HEK293 (cell line): ENCODE measurements at regions of chr22 and their contacts with region 1.

Region 1: DNA sequence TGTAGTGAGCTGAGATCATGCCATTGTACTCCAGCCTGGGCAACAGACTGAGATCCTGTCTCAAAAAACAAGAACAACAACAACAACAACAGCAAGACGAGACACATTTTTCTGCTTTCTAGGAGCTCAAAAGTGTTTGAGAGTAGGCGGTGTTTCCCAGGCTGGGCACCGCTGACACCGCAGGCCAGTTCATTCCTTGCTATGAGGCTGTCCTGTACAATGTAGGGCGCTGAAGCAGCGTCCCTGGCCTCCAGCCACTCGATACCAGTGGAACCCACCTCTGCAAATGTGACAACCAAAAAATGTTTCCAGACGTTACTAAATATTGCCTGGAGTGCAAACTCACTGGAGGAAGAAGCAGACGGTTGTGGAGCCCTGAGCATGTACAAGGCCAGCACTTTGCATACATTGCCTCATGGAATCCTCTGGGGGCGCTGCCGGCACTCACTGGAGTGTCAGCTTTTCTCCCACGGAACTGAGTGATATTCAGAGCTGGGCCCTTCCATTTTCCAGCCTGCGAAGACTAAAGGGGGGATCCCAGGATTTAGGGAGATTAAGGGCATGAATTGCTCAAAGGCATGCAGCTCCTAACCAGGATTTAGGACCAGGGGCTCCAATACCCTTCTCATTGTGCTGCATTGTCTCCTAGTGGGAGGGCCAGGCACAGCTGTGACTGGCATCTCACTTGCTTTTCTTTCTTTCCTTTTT is 5.8 kb upstream of the MIEF1 start:
- H3K4me3 ChIP-seq: no peak overlapping the region
- H3K27ac ChIP-seq: no peak overlapping the region
- H3K4me1 ChIP-seq: peaks cover 4% of the 10 kb centered on the region
- CTCF ChIP-seq: peak; percentile 69

Region 2: DNA sequence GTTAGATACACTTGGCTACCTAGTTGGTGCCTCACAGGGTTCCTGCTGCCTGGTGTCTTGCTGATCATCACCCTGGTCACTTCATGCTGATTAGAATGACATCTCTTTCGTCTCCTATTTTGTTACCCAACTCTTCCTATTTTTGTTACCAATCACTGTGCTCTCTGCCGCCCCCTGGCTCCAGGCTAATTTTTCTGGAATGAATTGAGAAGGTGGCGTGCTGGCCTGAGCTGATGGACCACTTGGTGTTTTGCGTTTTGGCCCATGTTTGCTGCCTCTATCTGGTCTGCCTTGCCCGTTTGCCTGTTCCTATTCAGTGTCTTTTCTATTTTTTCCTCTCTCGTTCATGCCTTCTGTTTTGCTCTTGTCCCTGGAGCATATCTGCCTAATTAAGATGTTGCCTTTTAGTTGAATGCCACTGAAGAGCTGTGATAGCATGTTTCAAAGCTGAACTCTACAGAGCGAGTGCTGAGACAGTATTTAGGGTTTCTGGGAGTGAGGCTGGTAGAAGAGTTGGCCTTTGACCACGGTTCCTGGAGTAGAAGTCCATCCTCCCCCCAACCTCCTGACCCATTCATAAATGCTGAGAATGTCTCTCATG is 18.2 kb after region 1 on chr22:
- CTCF ChIA-PET with region 1: interaction called, 84 read pairs
- POLR2A ChIA-PET with region 1: interaction called, 117 read pairs
- H3K4me3 ChIP-seq: no peak overlapping the region
- H3K27ac ChIP-seq: no peak overlapping the region
- H3K4me1 ChIP-seq: 0 out of 2 replicates have a peak, but pooled peaks cover 5% of the 10 kb centered on the region
- CTCF ChIP-seq: peak; percentile 64

Region 3: DNA sequence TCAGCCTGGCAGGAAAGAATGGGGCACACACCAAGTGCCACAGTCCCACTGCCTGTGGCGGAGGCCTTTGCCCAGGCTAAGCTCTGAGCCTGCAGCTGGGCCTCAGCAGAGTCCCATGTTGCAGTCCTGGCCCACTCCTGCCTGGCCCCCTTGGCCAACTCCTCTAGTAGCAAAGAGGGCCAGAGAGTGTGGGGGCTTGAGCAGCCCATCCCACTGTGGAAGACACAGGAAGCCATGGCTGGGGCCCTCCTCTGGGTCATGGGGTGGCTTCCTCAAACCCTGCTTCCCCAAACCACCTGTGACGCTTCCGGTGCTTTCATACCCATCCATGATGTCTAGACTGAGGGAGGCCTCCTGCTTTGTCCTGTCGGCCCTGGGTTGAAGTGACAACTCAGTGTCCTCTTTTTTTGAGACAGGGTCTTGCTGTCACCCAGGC is 30.5 kb after region 1 on chr22:
- CTCF ChIA-PET with region 1: interaction called, 380 read pairs
- POLR2A ChIA-PET with region 1: interaction called, 117 read pairs
- H3K4me3 ChIP-seq: no peak overlapping the region
- H3K27ac ChIP-seq: peak overlapping the region; percentile 36
- H3K4me1 ChIP-seq: peaks cover 14% of the 10 kb centered on the region
- CTCF ChIP-seq: no peak